Transverse colon (tissue), 4 donors: ENCODE measurements at regions of chr6 and their contacts with region 1.

Region 1: DNA sequence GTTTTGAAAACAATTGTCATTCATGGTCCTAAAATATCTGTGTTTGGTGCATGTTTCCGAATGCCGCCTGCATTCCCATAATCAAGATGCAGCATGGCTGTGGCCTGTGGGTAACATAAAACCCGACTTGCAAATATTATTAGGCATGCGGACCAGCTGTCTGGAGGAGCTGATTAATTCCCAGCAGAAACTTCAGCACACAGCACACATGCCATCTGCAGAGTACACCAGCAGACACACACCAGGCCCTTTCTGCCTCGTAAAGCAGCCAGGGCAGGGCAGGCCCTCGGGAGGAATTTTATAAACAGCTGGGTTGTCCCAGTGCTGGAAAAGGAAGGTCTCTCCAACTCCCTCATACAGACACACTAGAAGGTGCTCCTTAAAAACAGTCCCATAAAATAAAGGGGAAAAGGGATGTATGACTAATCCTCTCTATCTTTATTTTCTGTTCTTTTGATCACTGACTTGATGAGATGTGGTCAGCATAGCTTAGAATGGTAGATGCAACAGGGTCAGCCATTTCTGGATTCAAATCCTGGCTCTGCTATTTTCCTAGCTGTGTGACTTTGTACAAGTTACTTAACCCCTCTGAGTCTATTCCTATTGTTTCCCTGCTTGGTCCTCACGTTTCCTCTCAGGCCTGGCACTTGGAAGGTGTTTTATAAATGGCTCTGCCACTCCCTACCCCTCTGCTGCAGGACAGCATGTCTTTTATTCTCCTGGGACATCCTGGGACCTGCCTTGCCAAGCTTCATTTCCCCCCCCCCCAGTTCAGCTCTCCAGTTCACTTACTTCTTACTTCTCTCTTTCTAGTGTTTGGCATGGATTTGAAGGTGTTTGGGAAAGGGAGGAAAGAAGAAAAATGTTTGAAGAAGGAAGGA is 85.9 kb upstream of the TRAF3IP2 start:
- DNase-seq: peak; percentile 47
- H3K4me3 ChIP-seq: no peak overlapping the region
- H3K27ac ChIP-seq: peak overlapping the region; percentile 77 to 91 (median 86)
- H3K4me1 ChIP-seq: peaks cover 21 to 62% (median 46%) of the 10 kb centered on the region in 4 donors
- H3K27me3 ChIP-seq: no peaks in the 10 kb centered on the region
- CTCF ChIP-seq: no peak
- EP300 ChIP-seq: peak; percentile 65
- POLR2A ChIP-seq: no peak

Region 2: GRCh38 chr6:111663692-111664564 is 27.7 kb before region 1 on chr6:
- in situ Hi-C with region 1: no loop called
- intact Hi-C with region 1: loop called (anchors 2 kb)
- DNase-seq: no peak
- H3K4me3 ChIP-seq: no peak overlapping the region
- H3K27ac ChIP-seq: peak overlapping the region; percentile 69 to 87 (median 76)
- H3K4me1 ChIP-seq: peaks cover 19 to 62% (median 46%) of the 10 kb centered on the region in 4 donors
- H3K27me3 ChIP-seq: no peaks in the 10 kb centered on the region
- CTCF ChIP-seq: no peak
- EP300 ChIP-seq: no peak
- POLR2A ChIP-seq: no peak